ENCODE measurements at regions of chr7 and their contacts with region 1.

Region 1: GRCh38 chr7:104883718-104884452 is 130.1 kb upstream of the KMT2E start:
- DNase-seq: peak; percentile 22
- H3K4me3 ChIP-seq: no peak overlapping the region
- H3K27me3 ChIP-seq: peaks cover 5% of the 10 kb centered on the region; the same call in 1 of the 2 replicates
- CTCF ChIP-seq: peak; percentile 98

Region 2: GRCh38 chr7:104231054-104232046 is 652.5 kb before region 1 on chr7:
- CTCF ChIA-PET with region 1: interaction called, 14 read pairs
- POLR2A ChIA-PET with region 1: no interaction called
- DNase-seq: no peak
- H3K4me3 ChIP-seq: no peak overlapping the region
- H3K27me3 ChIP-seq: peaks cover 2% of the 10 kb centered on the region
- CTCF ChIP-seq: peak; percentile 92

Region 3: GRCh38 chr7:104873346-104873849 is 10.5 kb before region 1 on chr7:
- CTCF ChIA-PET with region 1: interaction called, 32 read pairs
- POLR2A ChIA-PET with region 1: no interaction called
- DNase-seq: no peak
- H3K4me3 ChIP-seq: no peak overlapping the region
- H3K27me3 ChIP-seq: no peaks in the 10 kb centered on the region
- CTCF ChIP-seq: no peak

Region 4: DNA sequence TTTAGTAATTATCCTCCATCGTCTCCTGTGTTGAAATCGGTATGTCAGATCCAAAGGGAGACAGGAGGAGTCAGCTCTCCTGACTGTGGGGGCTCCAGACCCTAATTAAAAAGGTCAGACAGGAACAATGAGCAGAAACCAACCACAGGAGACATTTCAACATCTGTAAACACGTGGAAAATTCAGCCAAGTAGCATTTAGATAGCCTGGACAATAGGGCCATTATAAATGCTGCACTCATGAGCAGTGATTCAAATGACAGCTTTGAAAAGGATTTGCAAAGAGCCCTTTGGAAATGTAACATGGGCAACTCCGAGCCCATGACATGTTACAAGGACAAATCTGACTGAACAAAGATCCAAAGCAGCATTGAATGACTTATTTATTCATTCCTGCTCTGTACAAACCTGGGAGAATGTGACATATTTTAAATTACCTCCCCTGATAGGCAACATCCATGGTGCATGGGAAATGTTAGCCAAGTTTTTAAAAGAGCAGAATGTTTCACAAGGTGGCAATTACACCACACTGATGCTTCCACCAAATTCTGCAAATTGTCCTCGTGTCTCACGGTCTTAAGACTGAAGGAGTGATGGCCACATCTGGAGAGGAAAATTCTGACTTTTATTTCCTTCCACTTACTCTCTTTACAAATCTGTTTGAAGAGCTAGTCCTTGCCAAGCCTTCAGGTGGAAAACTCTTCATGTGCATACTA is 16.8 kb after region 1 on chr7:
- CTCF ChIA-PET with region 1: interaction called, 54 read pairs
- POLR2A ChIA-PET with region 1: no interaction called
- DNase-seq: no peak
- H3K4me3 ChIP-seq: no peak overlapping the region
- H3K27me3 ChIP-seq: peaks cover 9% of the 10 kb centered on the region
- CTCF ChIP-seq: no peak

Region 5: GRCh38 chr7:104923010-104923421 is 39.1 kb after region 1 on chr7:
- CTCF ChIA-PET with region 1: interaction called, 207 read pairs
- POLR2A ChIA-PET with region 1: no interaction called
- DNase-seq: peak; percentile 37
- H3K4me3 ChIP-seq: no peak overlapping the region
- H3K27me3 ChIP-seq: no peaks in the 10 kb centered on the region
- CTCF ChIP-seq: peak; percentile 79